OCI-LY7 (cell line): ENCODE measurements at regions of chr12 and their contacts with region 1.

Region 1: DNA sequence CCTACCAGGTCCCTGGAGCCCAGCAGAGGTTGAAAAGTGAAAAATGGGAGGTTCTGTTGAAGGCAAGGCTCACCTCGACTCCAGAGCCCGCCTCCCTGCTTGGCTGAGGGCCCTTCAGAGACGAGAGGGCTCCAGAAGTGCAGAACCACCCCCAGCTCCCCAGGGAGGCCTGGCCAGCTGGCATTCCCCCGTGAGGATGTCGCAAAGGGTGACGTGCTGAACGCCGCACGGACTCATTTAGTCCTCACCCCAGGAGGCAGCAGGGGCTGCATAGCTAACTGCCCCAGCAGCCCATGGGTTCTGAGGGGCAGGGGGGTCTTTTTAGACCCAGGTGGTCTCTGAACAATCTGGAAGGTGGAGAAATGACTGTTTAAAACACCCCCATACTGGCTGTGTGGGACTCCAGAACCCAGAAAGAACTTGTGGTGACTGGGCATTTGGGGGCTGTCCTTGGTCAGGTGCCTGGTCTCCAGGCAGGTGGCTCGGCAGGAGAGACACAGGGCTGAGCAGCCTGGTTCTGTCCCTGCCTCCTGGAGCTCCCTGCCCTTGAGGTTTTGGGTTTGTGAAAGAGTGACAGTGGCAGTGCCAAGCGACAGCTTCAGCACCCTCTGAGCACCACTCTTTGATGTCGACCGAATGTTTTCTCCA is 32.0 kb downstream of the ANAPC7 start:
- DNase-seq: peak; percentile 89
- H3K4me3 ChIP-seq: peak overlapping the region; percentile 35
- H3K27ac ChIP-seq: peak overlapping the region; percentile 73
- H3K4me1 ChIP-seq: peaks cover 84% of the 10 kb centered on the region
- CTCF ChIP-seq: no peak

Region 2: GRCh38 chr12:110088936-110089335 is 282.6 kb before region 1 on chr12:
- CTCF ChIA-PET with region 1: no interaction called
- POLR2A ChIA-PET with region 1: no interaction called
- intact Hi-C with region 1: no loop called
- DNase-seq: no peak
- H3K4me3 ChIP-seq: no peak overlapping the region
- H3K27ac ChIP-seq: no peak overlapping the region
- H3K4me1 ChIP-seq: no peaks in the 10 kb centered on the region
- CTCF ChIP-seq: no peak

Region 3: DNA sequence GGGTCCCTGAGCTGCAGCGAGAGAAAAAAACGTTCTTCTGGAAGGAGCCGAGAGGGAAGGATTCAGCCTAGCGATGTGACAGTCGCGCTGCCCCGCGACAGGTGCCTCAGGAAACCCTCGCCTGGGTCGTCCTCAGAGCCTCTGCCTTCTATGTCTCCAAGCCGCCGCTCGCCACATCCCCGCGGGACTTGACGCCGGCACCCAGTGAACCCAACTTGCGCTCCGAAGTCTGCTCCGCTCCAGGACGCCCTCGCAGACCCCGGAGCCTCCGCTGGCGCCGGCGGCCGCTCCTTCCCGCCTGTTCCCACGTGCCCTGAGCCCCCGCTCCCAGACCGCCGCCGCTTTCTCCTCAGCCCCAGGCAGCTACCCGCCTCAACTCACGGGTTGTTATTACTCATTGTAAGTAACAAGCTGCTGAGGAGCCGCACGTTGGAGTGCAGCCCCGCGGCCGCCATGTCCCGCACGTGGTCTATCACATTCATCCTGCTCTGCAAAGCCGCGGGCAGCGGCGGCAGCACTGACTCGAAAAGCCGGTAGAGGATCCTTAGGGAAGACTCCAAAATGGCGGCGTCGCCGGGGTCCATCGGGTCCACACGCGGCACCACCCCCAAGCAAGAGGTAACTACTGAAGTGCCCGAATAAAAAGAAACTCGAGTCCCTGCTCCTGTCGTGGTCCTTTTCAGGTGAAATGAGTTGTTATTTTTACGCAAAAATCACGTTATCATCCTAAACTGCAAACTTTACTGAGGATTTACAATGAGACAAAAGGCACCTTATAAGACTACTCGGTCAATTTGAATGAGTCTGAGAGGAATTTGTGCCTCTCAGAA is 31.8 kb after region 1 on chr12 and contains the start of gene ANAPC7:
- CTCF ChIA-PET with region 1: no interaction called
- POLR2A ChIA-PET with region 1: interaction called, 4 read pairs
- intact Hi-C with region 1: loop called (anchors 2 kb)
- DNase-seq: peak; percentile 95
- H3K4me3 ChIP-seq: peak within 1 kb of the TSS; percentile 78
- H3K27ac ChIP-seq: peak within 1 kb of the TSS; percentile 87
- H3K4me1 ChIP-seq: peaks cover 31% of the 10 kb centered on the region
- CTCF ChIP-seq: 0 out of 2 replicates have a peak, but pooled peaks have one; percentile 26
- total RNA-seq, gene ANAPC7: 84.7 and 105 TPM in 2 replicates